ENCODE measurements at regions of chr7 and their contacts with region 1.

Region 1: DNA sequence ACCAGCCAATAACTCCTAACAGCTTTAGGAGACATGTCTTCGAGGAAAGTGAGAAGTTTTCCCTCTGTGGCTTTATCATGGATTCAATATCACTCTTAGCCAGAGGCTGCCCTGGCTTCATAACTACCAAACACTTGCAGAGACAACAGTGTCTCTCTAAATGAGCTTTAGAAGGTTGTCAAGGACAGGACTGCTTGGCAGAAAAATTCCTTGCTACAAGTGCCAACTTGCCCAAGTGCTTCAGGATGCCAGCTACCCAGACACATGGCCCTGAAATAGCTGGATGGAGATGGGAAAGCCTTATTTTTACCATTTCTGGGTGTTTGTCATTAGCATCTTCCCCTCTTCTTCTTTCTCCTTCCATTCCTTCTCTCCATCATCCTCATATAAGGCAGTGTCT is 137.1 kb upstream of the MDFIC start:
- DNase-seq: no peak
- H3K4me3 Mint-ChIP-seq: no peak overlapping the region
- H3K27ac Mint-ChIP-seq: no peak overlapping the region
- H3K4me1 Mint-ChIP-seq: peaks cover 24% of the 10 kb centered on the region
- H3K27me3 Mint-ChIP-seq: no peaks in the 10 kb centered on the region

Region 2: GRCh38 chr7:114715907-114716306 is 68.8 kb before region 1 on chr7:
- intact Hi-C with region 1: loop called (anchors 5 kb)
- DNase-seq: no peak
- H3K4me3 Mint-ChIP-seq: no peak overlapping the region
- H3K27ac Mint-ChIP-seq: no peak overlapping the region
- H3K4me1 Mint-ChIP-seq: no peaks in the 10 kb centered on the region
- H3K27me3 Mint-ChIP-seq: no peaks in the 10 kb centered on the region

Region 3: GRCh38 chr7:114799628-114800028 is 14.9 kb after region 1 on chr7:
- intact Hi-C with region 1: loop called (anchors 1 kb)
- DNase-seq: no peak
- H3K4me3 Mint-ChIP-seq: no peak overlapping the region
- H3K27ac Mint-ChIP-seq: peak overlapping the region; percentile 94
- H3K4me1 Mint-ChIP-seq: peaks cover 48% of the 10 kb centered on the region
- H3K27me3 Mint-ChIP-seq: no peaks in the 10 kb centered on the region

Measured in activated T-helper 1 cell treated with anti-CD3 and anti-CD28 coated beads, Interleukin-12 subunit alpha, Interleukin-12 subunit beta, Interleukin-2, Interleukin-4 antibody, amounts not matched to agents 30 ng/mL and 10 ng/mL and 1 ng/mL, durations not matched to agents 14 hours and 24 hours and 36 hours (primary cell).